ENCODE measurements at regions of chrX and their contacts with region 1.

Region 1: GRCh38 chrX:9464435-9465371 is at the start of gene TBL1X:
- DNase-seq: peak; percentile 74
- H3K4me3 ChIP-seq: peak within 1 kb of the TSS; percentile 53 to 72 (median 68)
- H3K27ac ChIP-seq: peak within 1 kb of the TSS; percentile 83 to 92 (median 88)
- H3K4me1 ChIP-seq: peaks cover 0 to 41% (median 20%) of the 10 kb centered on the region in 4 donors
- H3K27me3 ChIP-seq: no peaks in the 10 kb centered on the region
- CTCF ChIP-seq: no peak
- EP300 ChIP-seq: no peak
- POLR2A ChIP-seq: no peak
- total RNA-seq, gene TBL1X: 16.1 to 25.8 (median 19.5) TPM

Region 2: DNA sequence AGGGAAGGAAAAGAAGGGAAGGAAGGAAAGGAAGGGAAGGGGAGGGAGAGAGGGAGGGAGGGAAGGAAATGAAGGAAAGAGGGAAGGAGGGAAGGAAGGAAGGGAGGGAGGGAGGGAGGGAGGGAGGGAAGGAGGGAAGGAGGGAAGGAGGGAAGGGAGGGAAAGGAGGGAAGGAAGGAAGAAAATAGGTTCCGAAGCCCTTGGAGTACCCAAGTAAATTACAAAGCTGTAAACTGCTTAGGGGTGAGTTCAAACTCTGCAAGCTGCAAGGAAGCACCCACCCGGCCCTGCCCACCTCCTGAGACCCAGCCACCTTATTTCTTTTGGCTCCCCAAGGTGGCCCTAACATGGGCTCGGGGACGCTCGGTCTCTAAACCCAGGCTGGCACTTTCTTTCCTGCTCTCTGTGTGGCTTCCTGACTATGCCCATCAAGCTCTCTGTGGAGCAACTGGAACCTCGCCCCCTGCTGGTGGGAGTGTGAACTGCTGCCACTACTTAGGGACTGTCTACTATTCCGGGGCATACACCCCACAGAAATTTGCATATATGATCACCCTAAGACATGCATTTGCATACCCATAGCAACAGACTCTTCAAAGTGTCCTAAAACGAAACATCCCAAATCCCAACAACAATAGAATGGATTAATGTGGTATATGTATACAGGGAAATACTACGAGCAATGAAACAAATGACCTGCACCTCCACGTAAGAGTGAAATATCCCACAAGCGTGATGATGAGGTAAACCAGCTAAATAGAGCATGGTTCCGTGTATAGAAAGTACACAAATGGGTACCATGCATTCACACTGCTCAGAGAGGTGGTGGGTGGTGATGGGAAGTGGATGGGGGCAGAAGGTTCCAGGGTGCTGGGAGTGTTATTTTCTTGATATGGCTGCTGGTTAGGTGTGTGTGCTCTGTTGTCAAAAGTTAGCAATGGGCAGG is 151.5 kb before region 1 on chrX:
- intact Hi-C with region 1: loop called (anchors 10 kb)
- DNase-seq: no peak
- H3K4me3 ChIP-seq: no peak overlapping the region
- H3K27ac ChIP-seq: no peak overlapping the region
- H3K4me1 ChIP-seq: peaks cover 0 to 9% (median 3%) of the 10 kb centered on the region in 4 donors
- H3K27me3 ChIP-seq: no peaks in the 10 kb centered on the region
- CTCF ChIP-seq: peak in 2 of 4 experiments; percentile 41 to 53
- EP300 ChIP-seq: no peak
- POLR2A ChIP-seq: no peak

Region 3: GRCh38 chrX:9341291-9342201 is 123.2 kb before region 1 on chrX:
- intact Hi-C with region 1: loop called (anchors 1 kb)
- DNase-seq: peak; percentile 84
- H3K4me3 ChIP-seq: peak overlapping the region in 2 of 4 donors; percentile 13 to 25
- H3K27ac ChIP-seq: peak overlapping the region; percentile 73 to 83 (median 78)
- H3K4me1 ChIP-seq: peaks cover 0 to 29% (median 23%) of the 10 kb centered on the region in 4 donors
- H3K27me3 ChIP-seq: no peaks in the 10 kb centered on the region
- CTCF ChIP-seq: no peak
- EP300 ChIP-seq: no peak
- POLR2A ChIP-seq: no peak

Region 4: GRCh38 chrX:9519546-9520216 is 55.0 kb after region 1 on chrX:
- intact Hi-C with region 1: no loop called
- DNase-seq: peak; percentile 84
- H3K4me3 ChIP-seq: no peak overlapping the region
- H3K27ac ChIP-seq: peak overlapping the region; percentile 59 to 77 (median 69)
- H3K4me1 ChIP-seq: peaks cover 0 to 33% (median 13%) of the 10 kb centered on the region in 4 donors
- H3K27me3 ChIP-seq: no peaks in the 10 kb centered on the region
- CTCF ChIP-seq: no peak
- EP300 ChIP-seq: peak; percentile 74 to 87 (median 82)
- POLR2A ChIP-seq: no peak

Region 5: DNA sequence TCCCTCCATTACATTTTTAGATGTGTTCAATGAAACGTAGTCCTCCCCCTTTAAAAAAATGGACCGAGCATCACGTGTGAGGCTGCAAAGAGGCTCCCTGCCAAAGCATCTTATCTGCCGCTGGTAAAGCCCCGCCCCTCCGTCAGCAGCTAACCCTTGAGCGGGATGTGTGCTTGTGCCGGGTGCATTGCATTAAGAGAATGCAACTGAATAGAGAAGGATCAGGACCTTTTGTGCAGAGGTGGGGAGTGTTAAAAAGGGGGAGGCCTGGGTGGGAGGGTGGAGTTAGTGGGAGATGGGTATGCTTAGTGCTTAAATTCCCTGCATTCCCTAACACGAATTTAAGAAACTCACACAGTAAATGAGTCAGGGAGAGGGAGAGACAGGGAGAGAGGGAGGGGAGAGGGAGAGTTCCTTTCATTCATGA is 66.2 kb after region 1 on chrX:
- intact Hi-C with region 1: loop called (anchors 5 kb)
- DNase-seq: peak; percentile 78
- H3K4me3 ChIP-seq: no peak overlapping the region
- H3K27ac ChIP-seq: peak overlapping the region in 1 of 4 donors; percentile 29
- H3K4me1 ChIP-seq: peaks cover 0 to 47% (median 28%) of the 10 kb centered on the region in 4 donors
- H3K27me3 ChIP-seq: no peaks in the 10 kb centered on the region
- CTCF ChIP-seq: no peak
- EP300 ChIP-seq: no peak
- POLR2A ChIP-seq: no peak

Region 6: GRCh38 chrX:9566150-9566621 is 101.5 kb after region 1 on chrX:
- intact Hi-C with region 1: loop called (anchors 10 kb)
- DNase-seq: peak; percentile 83
- H3K4me3 ChIP-seq: no peak overlapping the region
- H3K27ac ChIP-seq: peak overlapping the region in 3 of 4 donors; percentile 30 to 60 (median 34)
- H3K4me1 ChIP-seq: peaks cover 0 to 24% (median 18%) of the 10 kb centered on the region in 4 donors
- H3K27me3 ChIP-seq: no peaks in the 10 kb centered on the region
- CTCF ChIP-seq: no peak
- EP300 ChIP-seq: no peak
- POLR2A ChIP-seq: no peak

Region 7: GRCh38 chrX:9635803-9636202 is 171.1 kb after region 1 on chrX:
- intact Hi-C with region 1: loop called (anchors 2 kb)
- DNase-seq: peak; percentile 80
- H3K4me3 ChIP-seq: no peak overlapping the region
- H3K27ac ChIP-seq: peak overlapping the region; percentile 65 to 82 (median 74)
- H3K4me1 ChIP-seq: peaks cover 0 to 19% (median 8%) of the 10 kb centered on the region in 4 donors
- H3K27me3 ChIP-seq: no peaks in the 10 kb centered on the region
- CTCF ChIP-seq: no peak
- EP300 ChIP-seq: peak; percentile 6 to 79 (median 58)
- POLR2A ChIP-seq: no peak

Region 8: DNA sequence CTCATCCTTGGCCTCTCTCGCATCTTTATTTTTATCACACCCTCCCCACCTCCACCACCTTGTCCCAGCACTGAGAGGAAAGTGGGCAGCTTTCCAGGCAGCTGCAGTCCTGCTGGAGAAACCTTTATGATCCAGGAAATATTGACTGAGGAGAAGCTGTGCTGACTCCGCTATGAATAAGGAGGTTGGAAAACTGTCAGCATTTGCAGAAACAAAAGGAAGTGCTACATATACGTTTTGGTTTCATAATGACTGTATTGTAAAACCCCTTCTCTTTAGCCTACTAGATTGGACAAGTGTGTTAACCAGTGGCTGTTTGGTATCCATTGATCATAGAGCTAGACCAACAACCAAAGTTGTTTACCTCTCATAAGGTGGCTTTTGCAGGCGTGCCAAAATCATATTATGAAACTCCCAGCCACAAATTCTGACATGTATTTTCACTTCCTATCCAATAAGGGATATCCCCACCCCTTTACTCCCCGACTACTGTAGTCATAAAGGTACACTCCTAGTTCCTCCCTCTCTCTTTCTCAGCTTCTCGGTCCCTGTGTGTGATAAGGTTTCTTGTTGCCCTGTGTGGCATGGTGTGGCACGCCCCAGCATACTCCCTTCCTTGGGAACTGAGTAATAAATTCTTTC is 212.5 kb after region 1 on chrX:
- intact Hi-C with region 1: loop called (anchors 2 kb)
- DNase-seq: peak; percentile 78
- H3K4me3 ChIP-seq: no peak overlapping the region
- H3K27ac ChIP-seq: peak overlapping the region in 3 of 4 donors; percentile 8 to 52 (median 47)
- H3K4me1 ChIP-seq: peaks cover 0 to 7% (median 0%) of the 10 kb centered on the region in 4 donors
- H3K27me3 ChIP-seq: no peaks in the 10 kb centered on the region
- CTCF ChIP-seq: no peak
- EP300 ChIP-seq: no peak
- POLR2A ChIP-seq: no peak